GM12878 (cell line): ENCODE measurements at regions of chr2 and their contacts with region 1.

Region 1: GRCh38 chr2:52518678-52519077 is 1248.9 kb upstream of the CHAC2 start:
- DNase-seq: no peak
- ATAC-seq: no peak
- H3K4me3 ChIP-seq: no peak overlapping the region
- H3K27ac ChIP-seq: no peak overlapping the region
- H3K4me1 ChIP-seq: no peaks in the 10 kb centered on the region
- H3K27me3 ChIP-seq: no peaks in the 10 kb centered on the region
- CTCF ChIP-seq: no peak
- EP300 ChIP-seq: no peak
- POLR2A ChIP-seq: no peak
- RAD21 ChIP-seq: no peak

Region 2: GRCh38 chr2:52558265-52558664 is 39.6 kb after region 1 on chr2:
- CTCF ChIA-PET with region 1: no interaction called
- POLR2A ChIA-PET with region 1: interaction called, 3 read pairs
- RAD21 ChIA-PET with region 1: no interaction called
- SMC1A ChIA-PET with region 1: interaction called, 3 read pairs
- in situ Hi-C with region 1: no loop called
- intact Hi-C with region 1: loop called (anchors 2 kb)
- DNase-seq: no peak
- ATAC-seq: no peak
- H3K4me3 ChIP-seq: no peak overlapping the region
- H3K27ac ChIP-seq: no peak overlapping the region
- H3K4me1 ChIP-seq: no peaks in the 10 kb centered on the region
- H3K27me3 ChIP-seq: no peaks in the 10 kb centered on the region
- CTCF ChIP-seq: no peak
- EP300 ChIP-seq: no peak
- POLR2A ChIP-seq: no peak
- RAD21 ChIP-seq: no peak

Region 3: DNA sequence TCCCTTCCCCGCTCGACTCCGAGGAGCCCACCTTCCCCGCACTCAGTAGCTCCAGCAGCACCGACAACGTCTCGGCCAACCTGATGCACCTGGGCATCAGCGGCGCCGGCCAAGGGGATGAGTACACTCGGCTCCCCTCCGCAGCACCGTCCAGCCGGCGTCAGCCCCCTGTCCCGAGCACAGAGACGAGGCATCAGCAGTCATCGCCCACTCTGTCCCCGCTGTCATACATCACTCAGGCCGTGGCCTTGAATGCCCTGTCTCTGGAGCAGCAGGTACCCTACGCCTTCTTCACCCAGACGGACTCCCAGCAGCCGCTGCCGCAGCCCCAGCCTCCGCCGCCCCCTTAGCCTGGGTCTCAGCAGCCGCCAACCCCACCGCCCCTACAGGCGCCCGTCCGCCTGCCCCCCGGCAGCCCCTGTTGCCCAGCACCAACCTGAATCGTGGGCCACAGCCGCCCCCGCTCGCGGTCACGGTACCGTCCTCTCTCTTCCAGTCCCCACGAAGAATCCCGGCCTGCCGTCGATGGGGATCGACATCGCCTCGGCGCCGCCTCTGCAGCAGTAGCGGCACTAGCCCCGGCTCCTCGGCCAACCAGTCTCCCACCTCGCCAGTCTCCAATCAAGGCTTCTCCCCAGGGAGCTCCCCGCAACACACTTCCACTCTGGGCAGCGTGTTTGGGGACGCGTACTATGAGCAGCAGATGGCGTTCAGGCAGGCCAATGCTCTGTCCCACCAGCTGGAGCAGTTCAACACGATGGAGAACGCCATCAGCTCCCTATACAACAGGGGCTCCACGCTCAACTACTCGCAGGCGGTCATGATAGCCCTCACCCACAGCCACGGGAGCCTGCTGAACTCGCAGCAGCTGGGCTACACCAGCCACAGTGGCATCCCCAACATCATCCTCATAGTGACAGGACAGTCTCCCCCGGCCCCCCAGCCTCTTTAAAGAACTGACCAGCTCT is 53.0 kb after region 1 on chr2:
- CTCF ChIA-PET with region 1: no interaction called
- POLR2A ChIA-PET with region 1: no interaction called
- RAD21 ChIA-PET with region 1: no interaction called
- SMC1A ChIA-PET with region 1: no interaction called
- in situ Hi-C with region 1: no loop called
- intact Hi-C with region 1: loop called (anchors 5 kb)
- DNase-seq: no peak
- ATAC-seq: no peak
- H3K4me3 ChIP-seq: no peak overlapping the region
- H3K27ac ChIP-seq: no peak overlapping the region
- H3K4me1 ChIP-seq: no peaks in the 10 kb centered on the region
- H3K27me3 ChIP-seq: no peaks in the 10 kb centered on the region
- CTCF ChIP-seq: no peak
- EP300 ChIP-seq: no peak
- POLR2A ChIP-seq: no peak
- RAD21 ChIP-seq: no peak

Region 4: GRCh38 chr2:52821626-52822025 is 302.9 kb after region 1 on chr2:
- CTCF ChIA-PET with region 1: no interaction called
- POLR2A ChIA-PET with region 1: no interaction called
- RAD21 ChIA-PET with region 1: no interaction called
- SMC1A ChIA-PET with region 1: no interaction called
- in situ Hi-C with region 1: no loop called
- intact Hi-C with region 1: no loop called
- DNase-seq: no peak
- ATAC-seq: peak; percentile 42; the same call in 1 of the 3 replicates
- H3K4me3 ChIP-seq: no peak overlapping the region
- H3K27ac ChIP-seq: no peak overlapping the region
- H3K4me1 ChIP-seq: no peaks in the 10 kb centered on the region
- H3K27me3 ChIP-seq: no peaks in the 10 kb centered on the region
- CTCF ChIP-seq: peak in 1 of 3 experiments; percentile 17; a peak in 1 of 6 replicates
- EP300 ChIP-seq: no peak
- POLR2A ChIP-seq: no peak
- RAD21 ChIP-seq: no peak

Region 5: DNA sequence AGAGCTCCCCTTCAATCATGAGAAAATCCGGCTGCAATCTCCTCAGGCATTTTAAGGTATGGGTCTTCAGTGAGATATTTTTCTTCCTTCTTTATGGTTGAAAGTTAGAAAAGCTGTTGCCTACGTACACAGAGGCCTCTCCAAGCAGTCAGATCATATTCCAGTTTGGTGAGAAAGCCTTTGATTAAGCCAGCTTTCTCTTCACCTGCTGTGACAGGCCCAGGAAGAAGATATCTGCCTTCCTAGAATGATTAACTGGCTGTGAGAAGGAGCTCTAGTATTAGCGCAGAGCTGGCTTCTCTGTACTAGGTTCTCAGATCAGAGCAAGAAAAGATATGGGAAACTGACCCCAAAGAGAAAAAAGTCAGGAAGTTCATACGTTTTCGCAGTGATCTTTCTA is 663.9 kb after region 1 on chr2:
- CTCF ChIA-PET with region 1: no interaction called
- POLR2A ChIA-PET with region 1: no interaction called
- RAD21 ChIA-PET with region 1: no interaction called
- SMC1A ChIA-PET with region 1: no interaction called
- in situ Hi-C with region 1: no loop called
- intact Hi-C with region 1: no loop called
- DNase-seq: no peak
- ATAC-seq: no peak
- H3K4me3 ChIP-seq: no peak overlapping the region
- H3K27ac ChIP-seq: no peak overlapping the region
- H3K4me1 ChIP-seq: no peaks in the 10 kb centered on the region
- H3K27me3 ChIP-seq: no peaks in the 10 kb centered on the region
- CTCF ChIP-seq: no peak
- EP300 ChIP-seq: no peak
- POLR2A ChIP-seq: no peak
- RAD21 ChIP-seq: no peak